ENCODE measurements at regions of chr7 and their contacts with region 1.

Region 1: DNA sequence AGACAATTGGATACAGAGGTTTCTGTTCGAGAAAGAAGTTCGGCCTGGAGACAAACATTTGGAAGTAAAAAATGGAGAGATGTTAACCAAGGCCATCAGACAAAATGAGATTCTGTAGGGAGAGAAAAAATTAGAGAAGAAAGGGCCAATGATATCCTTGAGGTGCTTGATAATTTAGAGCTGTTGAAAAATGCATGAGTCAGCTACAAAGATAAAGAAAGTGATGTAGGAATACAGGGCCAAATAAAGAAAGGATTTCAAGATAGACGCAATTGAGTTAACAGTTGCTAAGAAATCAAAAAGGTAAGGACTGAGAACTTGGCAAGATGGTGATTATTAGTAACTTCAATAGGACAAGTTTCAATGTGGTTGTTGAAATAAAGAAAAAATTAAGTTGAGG is 384.2 kb upstream of the SEMA3A start:
- DNase-seq: no peak
- ATAC-seq: no peak
- H3K4me3 ChIP-seq: no peak overlapping the region
- H3K27ac ChIP-seq: no peak overlapping the region
- H3K4me1 ChIP-seq: no peaks in the 10 kb centered on the region
- H3K27me3 ChIP-seq: no peaks in the 10 kb centered on the region
- CTCF ChIP-seq: no peak

Region 2: GRCh38 chr7:84139986-84140729 is 438.7 kb before region 1 on chr7:
- intact Hi-C with region 1: no loop called
- DNase-seq: no peak
- ATAC-seq: no peak
- H3K4me3 ChIP-seq: no peak overlapping the region
- H3K27ac ChIP-seq: no peak overlapping the region
- H3K4me1 ChIP-seq: no peaks in the 10 kb centered on the region
- H3K27me3 ChIP-seq: no peaks in the 10 kb centered on the region
- CTCF ChIP-seq: no peak

Region 3: GRCh38 chr7:84658286-84658685 is 79.5 kb after region 1 on chr7:
- intact Hi-C with region 1: loop called in 1 of 10 experiments (anchors 5 kb)
- DNase-seq: no peak
- ATAC-seq: no peak
- H3K4me3 ChIP-seq: no peak overlapping the region
- H3K27ac ChIP-seq: no peak overlapping the region
- H3K4me1 ChIP-seq: no peaks in the 10 kb centered on the region
- H3K27me3 ChIP-seq: no peaks in the 10 kb centered on the region
- CTCF ChIP-seq: no peak